HEK293 (cell line): ENCODE measurements at regions of chr20 and their contacts with region 1.

Region 1: GRCh38 chr20:330233-331149 is 5.1 kb downstream of the SOX12 start:
- H3K4me3 ChIP-seq: no peak overlapping the region
- H3K27ac ChIP-seq: no peak overlapping the region
- H3K4me1 ChIP-seq: peaks cover 6% of the 10 kb centered on the region; the same call in 1 of the 2 replicates
- CTCF ChIP-seq: peak; percentile 63; the same call in 1 of the 2 replicates

Region 2: GRCh38 chr20:79565-79964 is 250.9 kb before region 1 on chr20:
- CTCF ChIA-PET with region 1: no interaction called
- POLR2A ChIA-PET with region 1: no interaction called
- H3K4me3 ChIP-seq: no peak overlapping the region
- H3K27ac ChIP-seq: no peak overlapping the region
- H3K4me1 ChIP-seq: no peaks in the 10 kb centered on the region
- CTCF ChIP-seq: no peak

Region 3: DNA sequence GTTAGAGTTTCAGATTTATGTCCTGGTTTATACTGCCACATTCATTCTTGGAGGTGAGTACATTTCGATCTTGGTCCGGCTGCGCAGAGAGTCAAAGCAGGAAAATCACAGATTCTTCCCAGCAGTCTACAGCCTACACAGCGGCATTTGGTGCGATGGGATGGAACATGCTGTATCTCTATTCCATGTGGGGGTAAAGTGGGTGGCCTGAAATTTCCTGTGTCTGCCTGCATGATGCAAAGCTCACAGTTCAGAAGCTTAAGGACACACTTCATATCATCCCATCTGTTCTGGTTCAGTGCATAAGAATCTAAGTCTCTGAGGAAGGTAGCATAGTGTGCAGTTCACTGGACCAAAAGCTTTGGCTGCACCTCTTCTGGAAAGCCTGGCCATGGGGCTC is 173.3 kb before region 1 on chr20 and contains the start of gene DEFB127:
- CTCF ChIA-PET with region 1: no interaction called
- POLR2A ChIA-PET with region 1: no interaction called
- H3K4me3 ChIP-seq: no peak within 1 kb of the TSS
- H3K27ac ChIP-seq: no peak within 1 kb of the TSS
- H3K4me1 ChIP-seq: no peaks in the 10 kb centered on the region
- CTCF ChIP-seq: no peak

Region 4: DNA sequence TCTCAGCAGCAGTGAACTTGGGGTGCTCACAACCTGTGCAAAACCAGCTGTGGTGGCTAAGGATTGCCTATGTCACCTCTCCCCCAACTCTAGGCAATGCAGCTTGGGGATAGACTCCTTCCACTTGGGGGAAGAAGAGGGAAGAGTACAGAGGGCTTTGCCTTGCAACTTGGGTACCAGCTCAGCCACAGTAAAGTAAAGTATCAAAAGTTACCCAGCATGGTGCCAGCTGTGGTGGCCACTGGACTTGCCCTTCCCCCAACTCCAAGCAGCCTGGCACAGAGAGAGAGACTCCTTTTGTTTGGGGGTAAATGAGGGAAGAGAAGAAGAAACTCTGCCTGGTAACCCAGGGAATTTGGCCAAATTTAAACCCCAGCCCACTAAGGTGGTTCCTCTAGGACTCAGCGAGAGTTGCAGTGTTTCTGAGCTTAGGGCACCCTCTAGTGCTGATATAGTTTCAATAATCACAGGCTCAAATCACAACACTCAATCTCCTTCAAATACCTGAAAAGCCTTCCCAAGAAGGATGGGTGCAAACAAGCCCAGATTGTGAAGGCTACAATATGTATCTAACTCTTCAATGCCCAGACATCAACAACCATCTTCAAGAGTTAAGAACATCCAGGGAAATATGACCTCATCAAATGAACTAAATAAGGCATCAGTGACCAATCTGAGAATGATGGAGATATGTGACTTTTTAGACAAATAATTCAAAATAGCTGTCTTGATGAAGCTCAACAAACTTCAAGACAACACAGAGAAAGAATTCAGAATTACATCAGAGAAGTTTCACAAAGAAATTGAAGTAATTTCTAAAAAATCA is 111.0 kb before region 1 on chr20:
- CTCF ChIA-PET with region 1: interaction called, 13 read pairs
- POLR2A ChIA-PET with region 1: no interaction called
- H3K4me3 ChIP-seq: no peak overlapping the region
- H3K27ac ChIP-seq: no peak overlapping the region
- H3K4me1 ChIP-seq: no peaks in the 10 kb centered on the region
- CTCF ChIP-seq: peak; percentile 75

Region 5: DNA sequence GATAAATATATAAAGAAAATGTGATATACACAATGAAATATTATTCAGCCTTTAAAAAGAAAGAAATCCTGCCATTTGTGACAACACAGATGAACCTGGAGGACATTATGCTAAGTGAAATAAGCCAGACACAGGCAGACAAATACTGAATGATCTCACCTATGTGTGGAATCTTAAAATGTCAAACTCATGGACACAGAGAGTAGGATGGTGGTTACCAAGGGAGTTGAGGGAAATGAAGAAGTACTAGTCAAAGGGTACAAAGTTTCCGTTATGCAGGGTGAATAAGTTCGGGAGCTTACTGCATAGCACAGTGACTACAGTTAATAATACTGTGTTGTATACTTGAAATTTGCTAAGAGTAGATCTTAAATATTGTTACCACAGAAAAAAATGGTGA is 87.6 kb before region 1 on chr20:
- CTCF ChIA-PET with region 1: interaction called, 12 read pairs
- POLR2A ChIA-PET with region 1: interaction called, 3 read pairs
- H3K4me3 ChIP-seq: no peak overlapping the region
- H3K27ac ChIP-seq: no peak overlapping the region
- H3K4me1 ChIP-seq: no peaks in the 10 kb centered on the region
- CTCF ChIP-seq: no peak

Region 6: GRCh38 chr20:266596-267562 is 63.6 kb before region 1 on chr20:
- CTCF ChIA-PET with region 1: interaction called, 29 read pairs
- POLR2A ChIA-PET with region 1: interaction called, 4 read pairs
- H3K4me3 ChIP-seq: peak overlapping the region; percentile 17; the same call in 1 of the 2 replicates
- H3K27ac ChIP-seq: no peak overlapping the region
- H3K4me1 ChIP-seq: no peaks in the 10 kb centered on the region
- CTCF ChIP-seq: peak; percentile 98

Region 7: GRCh38 chr20:297098-297924 is 33.2 kb before region 1 on chr20 and contains the start of gene ZCCHC3:
- CTCF ChIA-PET with region 1: interaction called, 21 read pairs
- POLR2A ChIA-PET with region 1: interaction called, 74 read pairs
- H3K4me3 ChIP-seq: peak within 1 kb of the TSS; percentile 53
- H3K27ac ChIP-seq: peak within 1 kb of the TSS; percentile 98
- H3K4me1 ChIP-seq: peaks cover 27% of the 10 kb centered on the region
- CTCF ChIP-seq: peak; percentile 87

Region 8: GRCh38 chr20:341682-342081 is 11.2 kb after region 1 on chr20:
- CTCF ChIA-PET with region 1: interaction called, 26 read pairs
- POLR2A ChIA-PET with region 1: interaction called, 23 read pairs
- H3K4me3 ChIP-seq: no peak overlapping the region
- H3K27ac ChIP-seq: no peak overlapping the region
- H3K4me1 ChIP-seq: peaks cover 4% of the 10 kb centered on the region
- CTCF ChIP-seq: no peak

Region 9: DNA sequence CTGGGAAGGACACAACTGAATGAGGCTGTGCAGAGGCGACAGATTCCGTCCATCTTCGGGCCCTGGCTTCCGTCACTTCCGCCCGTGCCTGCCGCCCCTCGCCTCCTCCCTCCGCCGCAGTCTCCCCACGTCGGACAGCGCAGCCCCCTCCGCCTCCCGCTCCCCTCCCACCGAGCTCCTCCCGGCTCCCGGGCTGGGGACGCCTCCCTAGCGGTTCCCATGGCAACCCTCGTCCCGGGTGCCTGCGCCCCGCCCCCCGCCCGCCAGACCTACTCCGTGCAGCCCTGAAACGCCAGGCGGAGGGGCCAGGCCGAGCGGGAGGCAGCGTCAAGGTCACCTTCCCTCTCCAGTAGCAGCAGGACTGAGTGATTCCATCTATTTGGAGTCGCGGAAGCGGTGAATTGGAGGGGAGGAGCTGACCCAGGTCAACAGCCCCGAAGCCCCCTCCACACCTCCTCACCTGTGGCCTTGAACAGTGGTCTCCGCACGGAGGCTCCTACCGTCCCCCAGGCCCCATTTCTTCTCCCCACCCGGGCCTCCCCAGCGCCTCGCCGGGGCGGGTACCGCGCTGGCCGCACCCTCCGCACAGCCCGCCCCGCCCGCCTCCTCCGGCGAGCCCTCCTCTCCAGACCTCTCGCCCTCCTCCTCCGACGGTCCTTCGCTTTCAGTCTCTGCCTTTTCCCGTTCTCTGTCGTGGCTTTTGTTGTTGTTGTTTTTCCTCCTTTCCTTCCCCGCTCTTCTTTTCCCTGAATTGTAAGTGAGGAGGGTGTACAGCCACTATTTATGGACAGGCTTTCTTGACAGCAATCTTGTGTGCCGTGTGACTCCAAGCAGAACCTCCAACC is 17.4 kb after region 1 on chr20:
- CTCF ChIA-PET with region 1: interaction called, 26 read pairs
- POLR2A ChIA-PET with region 1: interaction called, 23 read pairs
- H3K4me3 ChIP-seq: peak overlapping the region; percentile 50
- H3K27ac ChIP-seq: peak overlapping the region; percentile 90
- H3K4me1 ChIP-seq: peaks cover 10% of the 10 kb centered on the region
- CTCF ChIP-seq: peak; percentile 18; the same call in 1 of the 2 replicates

Region 10: GRCh38 chr20:472889-473292 is 142.4 kb after region 1 on chr20:
- CTCF ChIA-PET with region 1: no interaction called
- POLR2A ChIA-PET with region 1: no interaction called
- H3K4me3 ChIP-seq: no peak overlapping the region
- H3K27ac ChIP-seq: no peak overlapping the region
- H3K4me1 ChIP-seq: no peaks in the 10 kb centered on the region
- CTCF ChIP-seq: no peak

Region 11: GRCh38 chr20:750801-751200 is 420.3 kb after region 1 on chr20:
- CTCF ChIA-PET with region 1: no interaction called
- POLR2A ChIA-PET with region 1: no interaction called
- H3K4me3 ChIP-seq: no peak overlapping the region
- H3K27ac ChIP-seq: no peak overlapping the region
- H3K4me1 ChIP-seq: no peaks in the 10 kb centered on the region
- CTCF ChIP-seq: no peak